GM12878 (cell line): ENCODE measurements at regions of chr16 and their contacts with region 1.

Region 1: DNA sequence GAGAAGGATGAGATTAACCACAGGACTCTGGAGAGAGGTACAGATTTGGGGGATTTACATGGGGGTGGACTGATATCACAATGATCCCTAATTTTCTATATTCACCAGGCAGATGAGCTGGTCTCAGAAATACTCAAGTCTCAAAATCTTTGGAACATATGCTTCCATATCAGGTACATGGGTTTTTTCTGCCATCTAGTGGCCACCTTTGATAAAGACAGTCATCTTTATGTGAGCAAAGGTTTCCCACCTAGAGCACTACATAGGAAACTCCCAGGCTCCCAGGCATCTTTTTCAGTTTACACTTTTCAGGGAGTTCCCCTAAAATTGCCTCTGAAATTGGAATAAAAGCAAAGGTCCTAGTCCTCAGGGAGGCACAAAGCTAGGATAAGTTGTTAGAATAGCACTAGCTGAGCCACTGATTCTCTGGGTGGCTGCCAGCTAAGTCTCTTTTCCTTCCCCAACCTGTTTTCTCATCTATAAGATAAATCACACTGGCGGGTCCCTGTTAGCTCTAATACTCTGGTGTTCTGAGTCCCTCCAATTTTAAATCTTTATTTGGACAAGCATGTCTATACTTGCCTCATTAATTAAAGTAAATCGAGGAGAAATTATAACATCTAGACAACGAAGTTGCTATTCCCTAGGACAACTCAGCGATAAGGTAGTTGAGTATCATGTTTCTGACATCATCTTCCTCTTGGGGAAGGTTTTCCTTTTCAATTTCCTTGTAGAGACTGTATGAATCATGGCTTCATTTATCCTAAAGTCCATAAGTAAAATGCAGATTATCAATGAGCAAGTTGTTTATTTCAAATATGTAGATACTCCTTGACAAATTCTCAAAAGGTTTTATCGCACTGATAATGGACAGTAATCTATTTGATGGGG is 19.0 kb upstream of the MON1B start:
- DNase-seq: no peak
- ATAC-seq: peak; percentile 89
- H3K4me3 ChIP-seq: no peak overlapping the region
- H3K27ac ChIP-seq: no peak overlapping the region
- H3K4me1 ChIP-seq: no peaks in the 10 kb centered on the region
- H3K27me3 ChIP-seq: no peaks in the 10 kb centered on the region
- CTCF ChIP-seq: peak; percentile 54 to 71 (median 68)
- EP300 ChIP-seq: no peak
- POLR2A ChIP-seq: no peak
- RAD21 ChIP-seq: peak; percentile 81

Region 2: DNA sequence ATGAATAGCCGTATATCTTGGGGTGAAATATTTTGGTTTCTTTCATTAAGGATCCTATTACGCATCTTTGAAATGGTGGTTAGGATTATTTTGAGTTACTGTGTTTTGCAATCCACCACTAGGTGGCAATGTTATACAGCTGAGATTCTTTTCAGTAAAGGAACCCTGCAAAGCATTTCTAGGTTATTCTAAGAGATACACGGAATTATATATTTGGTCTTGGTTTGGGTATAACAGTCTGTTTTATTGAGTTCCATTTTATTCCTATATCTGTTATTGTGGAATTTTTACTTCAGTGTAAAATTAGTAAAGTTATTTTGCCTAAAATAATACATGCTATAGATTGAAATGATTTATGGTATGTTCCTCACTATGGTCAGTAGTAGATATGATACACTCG is 1382.8 kb before region 1 on chr16:
- CTCF ChIA-PET with region 1: interaction called, 32 read pairs
- POLR2A ChIA-PET with region 1: no interaction called
- RAD21 ChIA-PET with region 1: interaction called, 4 read pairs
- SMC1A ChIA-PET with region 1: interaction called, 10 read pairs
- in situ Hi-C with region 1: loop called (anchors 5 kb)
- intact Hi-C with region 1: loop called (anchors 2 kb)
- DNase-seq: no peak
- ATAC-seq: peak; percentile 89
- H3K4me3 ChIP-seq: no peak overlapping the region
- H3K27ac ChIP-seq: no peak overlapping the region
- H3K4me1 ChIP-seq: 0 out of 2 replicates have a peak, but pooled peaks cover 3% of the 10 kb centered on the region
- H3K27me3 ChIP-seq: no peaks in the 10 kb centered on the region
- CTCF ChIP-seq: peak; percentile 60 to 74 (median 73)
- EP300 ChIP-seq: no peak
- POLR2A ChIP-seq: no peak
- RAD21 ChIP-seq: peak; percentile 90

Region 3: GRCh38 chr16:76653390-76654026 is 518.5 kb before region 1 on chr16:
- CTCF ChIA-PET with region 1: interaction called, 7 read pairs
- POLR2A ChIA-PET with region 1: no interaction called
- RAD21 ChIA-PET with region 1: interaction called, 4 read pairs
- SMC1A ChIA-PET with region 1: interaction called, 3 read pairs
- in situ Hi-C with region 1: no loop called
- intact Hi-C with region 1: loop called (anchors 5 kb)
- DNase-seq: peak; percentile 9
- ATAC-seq: peak; percentile 93
- H3K4me3 ChIP-seq: no peak overlapping the region
- H3K27ac ChIP-seq: no peak overlapping the region
- H3K4me1 ChIP-seq: no peaks in the 10 kb centered on the region
- H3K27me3 ChIP-seq: no peaks in the 10 kb centered on the region
- CTCF ChIP-seq: peak; percentile 53 to 78 (median 61); a peak in 5 of 6 replicates
- EP300 ChIP-seq: no peak
- POLR2A ChIP-seq: no peak
- RAD21 ChIP-seq: peak; percentile 82

Region 4: DNA sequence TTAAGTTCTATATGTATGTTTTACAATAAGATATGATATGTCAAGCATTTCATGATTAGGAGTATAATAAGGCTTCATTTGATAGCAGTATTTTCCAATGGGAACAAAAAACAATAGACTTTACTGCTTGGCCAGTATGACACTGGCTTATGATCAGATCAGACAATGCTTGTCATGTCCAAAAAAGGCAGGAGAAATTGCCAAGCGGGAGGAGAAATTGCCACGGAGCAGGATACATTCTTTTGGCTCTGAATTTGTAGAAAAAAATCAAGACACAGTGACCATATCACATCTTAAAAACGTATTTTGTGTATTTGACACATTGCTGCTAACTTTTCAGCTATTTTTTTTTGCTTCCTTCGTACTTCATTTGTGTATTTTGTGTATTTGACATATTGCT is 490.7 kb before region 1 on chr16:
- CTCF ChIA-PET with region 1: no interaction called
- POLR2A ChIA-PET with region 1: no interaction called
- RAD21 ChIA-PET with region 1: interaction called, 5 read pairs
- SMC1A ChIA-PET with region 1: interaction called, 13 read pairs
- in situ Hi-C with region 1: no loop called
- intact Hi-C with region 1: no loop called
- DNase-seq: no peak
- ATAC-seq: no peak
- H3K4me3 ChIP-seq: no peak overlapping the region
- H3K27ac ChIP-seq: no peak overlapping the region
- H3K4me1 ChIP-seq: no peaks in the 10 kb centered on the region
- H3K27me3 ChIP-seq: no peaks in the 10 kb centered on the region; a peak in 1 of 4 replicates
- CTCF ChIP-seq: no peak
- EP300 ChIP-seq: no peak
- POLR2A ChIP-seq: no peak
- RAD21 ChIP-seq: no peak

Region 5: GRCh38 chr16:77002644-77003043 is 169.3 kb before region 1 on chr16:
- CTCF ChIA-PET with region 1: no interaction called
- POLR2A ChIA-PET with region 1: no interaction called
- RAD21 ChIA-PET with region 1: no interaction called
- SMC1A ChIA-PET with region 1: no interaction called
- in situ Hi-C with region 1: no loop called
- intact Hi-C with region 1: no loop called
- DNase-seq: no peak
- ATAC-seq: no peak
- H3K4me3 ChIP-seq: no peak overlapping the region
- H3K27ac ChIP-seq: no peak overlapping the region
- H3K4me1 ChIP-seq: no peaks in the 10 kb centered on the region
- H3K27me3 ChIP-seq: no peaks in the 10 kb centered on the region
- CTCF ChIP-seq: no peak
- EP300 ChIP-seq: no peak
- POLR2A ChIP-seq: no peak
- RAD21 ChIP-seq: no peak

Region 6: DNA sequence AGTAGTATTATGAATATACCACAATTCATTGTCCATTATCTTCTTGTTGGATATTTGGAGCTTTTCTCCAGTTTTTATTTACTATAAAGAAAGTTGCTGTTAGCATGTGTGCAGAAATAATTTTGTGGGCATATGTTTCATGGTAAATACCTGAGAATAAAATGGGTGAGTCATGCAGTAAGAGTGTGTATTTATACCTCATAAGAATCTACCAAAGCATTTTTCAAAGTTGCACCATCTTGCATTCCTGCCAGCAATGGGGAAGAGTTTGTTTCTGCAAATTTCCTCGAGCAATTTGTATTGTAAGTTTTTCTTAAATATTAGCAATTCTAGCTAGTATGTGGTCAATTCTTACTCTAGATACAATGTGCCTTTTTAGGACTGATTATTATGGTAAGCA is 11.1 kb after region 1 on chr16:
- CTCF ChIA-PET with region 1: interaction called, 32 read pairs
- POLR2A ChIA-PET with region 1: no interaction called
- RAD21 ChIA-PET with region 1: interaction called, 3 read pairs
- SMC1A ChIA-PET with region 1: interaction called, 5 read pairs
- in situ Hi-C with region 1: no loop called
- intact Hi-C with region 1: no loop called
- DNase-seq: no peak
- ATAC-seq: no peak
- H3K4me3 ChIP-seq: no peak overlapping the region
- H3K27ac ChIP-seq: no peak overlapping the region
- H3K4me1 ChIP-seq: no peaks in the 10 kb centered on the region
- H3K27me3 ChIP-seq: no peaks in the 10 kb centered on the region
- CTCF ChIP-seq: no peak
- EP300 ChIP-seq: no peak
- POLR2A ChIP-seq: no peak
- RAD21 ChIP-seq: no peak

Region 7: GRCh38 chr16:77271532-77272426 is 99.8 kb after region 1 on chr16:
- CTCF ChIA-PET with region 1: no interaction called
- POLR2A ChIA-PET with region 1: no interaction called
- RAD21 ChIA-PET with region 1: no interaction called
- SMC1A ChIA-PET with region 1: no interaction called
- in situ Hi-C with region 1: no loop called
- intact Hi-C with region 1: no loop called
- DNase-seq: no peak
- ATAC-seq: no peak
- H3K4me3 ChIP-seq: no peak overlapping the region
- H3K27ac ChIP-seq: no peak overlapping the region
- H3K4me1 ChIP-seq: no peaks in the 10 kb centered on the region
- H3K27me3 ChIP-seq: no peaks in the 10 kb centered on the region
- CTCF ChIP-seq: no peak
- EP300 ChIP-seq: no peak
- POLR2A ChIP-seq: no peak
- RAD21 ChIP-seq: no peak